HEK293 (cell line): ENCODE measurements at regions of chr11 and their contacts with region 1.

Region 1: GRCh38 chr11:44524751-44525201 is 40.7 kb upstream of the CD82 start:
- H3K4me3 ChIP-seq: no peak overlapping the region
- H3K27ac ChIP-seq: no peak overlapping the region
- H3K4me1 ChIP-seq: no peaks in the 10 kb centered on the region
- CTCF ChIP-seq: no peak

Region 2: GRCh38 chr11:44538375-44539054 is 13.7 kb after region 1 on chr11:
- CTCF ChIA-PET with region 1: interaction called, 17 read pairs
- POLR2A ChIA-PET with region 1: interaction called, 3 read pairs
- H3K4me3 ChIP-seq: no peak overlapping the region
- H3K27ac ChIP-seq: no peak overlapping the region
- H3K4me1 ChIP-seq: no peaks in the 10 kb centered on the region
- CTCF ChIP-seq: peak; percentile 80